ENCODE measurements at regions of chr1 and their contacts with region 1.

Region 1: GRCh38 chr1:96845464-96845863 is 123.9 kb downstream of the PTBP2 start:
- DNase-seq: peak in 3 of 5 donors; percentile 1 to 7 (median 5)
- H3K4me3 ChIP-seq: no peak overlapping the region
- H3K4me3 Mint-ChIP-seq: no peak overlapping the region
- H3K27ac ChIP-seq: no peak overlapping the region
- H3K27ac Mint-ChIP-seq: no peak overlapping the region
- H3K4me1 ChIP-seq: no peaks in the 10 kb centered on the region
- H3K4me1 Mint-ChIP-seq: peaks cover 0 to 4% (median under 1%) of the 10 kb centered on the region in 4 donors
- H3K27me3 ChIP-seq: no peaks in the 10 kb centered on the region
- H3K27me3 Mint-ChIP-seq: peaks cover 3 to 4% of the 10 kb centered on the region in 2 donors

Region 2: GRCh38 chr1:96236156-96236739 is 609.2 kb before region 1 on chr1:
- CTCF ChIA-PET with region 1: no interaction called
- POLR2A ChIA-PET with region 1: no interaction called
- intact Hi-C with region 1: loop called (anchors 10 kb)
- DNase-seq: peak in 1 of 5 donors; percentile 1
- H3K4me3 ChIP-seq: no peak overlapping the region
- H3K4me3 Mint-ChIP-seq: no peak overlapping the region
- H3K27ac ChIP-seq: no peak overlapping the region
- H3K27ac Mint-ChIP-seq: no peak overlapping the region
- H3K4me1 ChIP-seq: no peaks in the 10 kb centered on the region
- H3K4me1 Mint-ChIP-seq: no peaks in the 10 kb centered on the region
- H3K27me3 ChIP-seq: no peaks in the 10 kb centered on the region
- H3K27me3 Mint-ChIP-seq: no peaks in the 10 kb centered on the region

Measured in CD4-positive, alpha-beta memory T cell (primary cell).